H1 (cell line): ENCODE measurements at regions of chr11 and their contacts with region 1.

Region 1: GRCh38 chr11:119101759-119102423 is at the start of gene DPAGT1:
- DNase-seq: peak; percentile 79 to 92
- H3K4me3 ChIP-seq: peak within 1 kb of the TSS; percentile 66 to 97 (median 90)
- H3K27ac ChIP-seq: peak within 1 kb of the TSS; percentile 99
- H3K4me1 ChIP-seq: peaks cover 3 to 20% (median 5%) of the 10 kb centered on the region in 4 experiments
- H3K27me3 ChIP-seq: no peaks in the 10 kb centered on the region
- CTCF ChIP-seq: no peak
- EP300 ChIP-seq: peak in 1 of 2 experiments; percentile 50; a peak in 1 of 3 replicates
- POLR2A ChIP-seq: peak; percentile 8 to 76; a peak in 1 of 3 replicates
- RAD21 ChIP-seq: no peak
- total RNA-seq, gene DPAGT1: 59.8 and 62.9 TPM in 2 replicates

Region 2: GRCh38 chr11:118672846-118673245 is 429.0 kb before region 1 on chr11:
- CTCF ChIA-PET with region 1: no interaction called
- POLR2A ChIA-PET with region 1: no interaction called
- DNase-seq: no peak
- H3K4me3 ChIP-seq: no peak overlapping the region
- H3K27ac ChIP-seq: no peak overlapping the region
- H3K4me1 ChIP-seq: no peaks in the 10 kb centered on the region
- H3K27me3 ChIP-seq: no peaks in the 10 kb centered on the region; a peak in 1 of 7 replicates
- CTCF ChIP-seq: peak in 2 of 3 experiments; percentile 26 to 52; a peak in 2 of 4 replicates
- EP300 ChIP-seq: no peak
- POLR2A ChIP-seq: no peak
- RAD21 ChIP-seq: peak; percentile 24 to 28; a peak in 3 of 4 replicates

Region 3: DNA sequence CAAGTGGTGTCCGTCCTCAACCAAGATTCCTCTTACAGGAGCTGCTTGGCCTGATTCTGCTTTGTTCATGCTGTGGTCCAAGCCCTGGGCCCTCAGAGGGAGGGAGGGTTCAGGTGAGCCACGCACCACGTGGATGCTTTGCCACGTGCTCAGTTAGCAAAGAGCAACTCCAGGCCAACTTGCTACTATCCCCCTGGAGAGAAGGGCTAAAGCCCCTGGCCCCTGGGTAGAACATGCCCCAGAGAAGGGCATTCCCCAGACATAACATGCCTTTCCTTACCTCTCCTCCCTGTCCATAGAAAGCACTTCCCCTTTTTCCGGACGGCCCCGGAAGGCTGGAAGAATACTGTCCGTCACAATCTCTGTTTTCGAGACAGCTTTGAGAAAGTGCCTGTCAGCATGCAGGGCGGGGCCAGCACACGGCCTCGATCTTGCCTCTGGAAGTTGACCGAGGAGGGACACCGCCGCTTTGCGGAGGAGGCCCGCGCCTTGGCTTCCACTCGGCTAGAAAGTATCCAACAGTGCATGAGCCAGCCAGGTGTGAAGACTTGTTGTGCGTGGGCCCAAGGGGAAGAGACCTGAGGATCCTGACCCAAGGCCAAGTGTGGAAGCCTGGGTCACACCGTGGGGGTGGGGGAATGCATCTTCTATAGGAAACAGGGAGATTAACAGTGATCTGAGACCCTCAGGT is 121.6 kb before region 1 on chr11:
- CTCF ChIA-PET with region 1: no interaction called
- POLR2A ChIA-PET with region 1: no interaction called
- DNase-seq: peak in 1 of 2 experiments; percentile 59
- H3K4me3 ChIP-seq: peak overlapping the region in 1 of 4 experiments; percentile 1; a peak in 1 of 8 replicates
- H3K27ac ChIP-seq: no peak overlapping the region
- H3K4me1 ChIP-seq: peaks cover 0 to 18% (median 10%) of the 10 kb centered on the region in 4 experiments; a peak in 5 of 7 replicates
- H3K27me3 ChIP-seq: peaks cover 0 to 5% (median 0%) of the 10 kb centered on the region in 4 experiments; a peak in 1 of 7 replicates
- CTCF ChIP-seq: no peak
- EP300 ChIP-seq: no peak
- POLR2A ChIP-seq: no peak
- RAD21 ChIP-seq: no peak

Region 4: DNA sequence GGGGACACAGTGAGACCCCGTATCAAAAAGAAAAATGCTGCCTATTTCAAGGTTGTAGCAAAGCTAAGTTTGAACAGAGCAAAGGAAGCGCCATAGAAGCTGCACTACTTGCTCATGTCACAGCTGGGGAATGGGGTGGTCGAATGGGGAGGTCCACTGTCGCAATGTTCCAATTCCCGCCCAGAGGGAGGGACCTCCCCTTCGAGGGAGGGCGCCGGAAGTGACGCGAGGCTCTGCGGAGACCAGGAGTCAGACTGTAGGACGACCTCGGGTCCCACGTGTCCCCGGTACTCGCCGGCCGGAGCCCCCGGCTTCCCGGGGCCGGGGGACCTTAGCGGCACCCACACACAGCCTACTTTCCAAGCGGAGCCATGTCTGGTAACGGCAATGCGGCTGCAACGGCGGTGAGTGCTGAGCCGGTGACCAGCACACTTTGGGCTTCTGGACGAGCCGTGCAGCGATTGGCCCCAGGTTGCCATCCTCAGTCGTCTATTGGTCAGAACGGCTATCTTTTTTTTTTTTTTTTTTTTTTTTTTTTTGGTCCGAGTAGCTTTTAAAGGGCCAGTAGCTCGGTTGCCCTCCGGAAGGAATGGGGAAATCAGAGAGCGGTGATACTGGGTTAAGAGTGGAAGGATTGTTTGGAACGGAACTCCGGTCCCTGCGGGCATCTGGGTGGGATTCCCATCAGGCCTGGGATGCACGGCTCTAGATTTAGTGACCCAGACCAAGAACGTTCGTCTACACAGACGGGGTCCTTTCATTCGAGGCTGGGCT is 17.0 kb before region 1 on chr11 and contains the start of gene HMBS:
- CTCF ChIA-PET with region 1: interaction called, 5 read pairs
- POLR2A ChIA-PET with region 1: interaction called, 141 read pairs
- DNase-seq: peak; percentile 75 to 97
- H3K4me3 ChIP-seq: peak within 1 kb of the TSS; percentile 78 to 97 (median 86)
- H3K27ac ChIP-seq: peak within 1 kb of the TSS; percentile 98
- H3K4me1 ChIP-seq: peaks cover 0 to 5% (median 2%) of the 10 kb centered on the region in 4 experiments; a peak in 2 of 7 replicates
- H3K27me3 ChIP-seq: no peaks in the 10 kb centered on the region
- CTCF ChIP-seq: no peak
- EP300 ChIP-seq: no peak
- POLR2A ChIP-seq: peak; percentile 68 to 95
- RAD21 ChIP-seq: no peak; a peak in 1 of 4 replicates
- total RNA-seq, gene HMBS: 65.5 and 69.3 TPM in 2 replicates

Region 5: DNA sequence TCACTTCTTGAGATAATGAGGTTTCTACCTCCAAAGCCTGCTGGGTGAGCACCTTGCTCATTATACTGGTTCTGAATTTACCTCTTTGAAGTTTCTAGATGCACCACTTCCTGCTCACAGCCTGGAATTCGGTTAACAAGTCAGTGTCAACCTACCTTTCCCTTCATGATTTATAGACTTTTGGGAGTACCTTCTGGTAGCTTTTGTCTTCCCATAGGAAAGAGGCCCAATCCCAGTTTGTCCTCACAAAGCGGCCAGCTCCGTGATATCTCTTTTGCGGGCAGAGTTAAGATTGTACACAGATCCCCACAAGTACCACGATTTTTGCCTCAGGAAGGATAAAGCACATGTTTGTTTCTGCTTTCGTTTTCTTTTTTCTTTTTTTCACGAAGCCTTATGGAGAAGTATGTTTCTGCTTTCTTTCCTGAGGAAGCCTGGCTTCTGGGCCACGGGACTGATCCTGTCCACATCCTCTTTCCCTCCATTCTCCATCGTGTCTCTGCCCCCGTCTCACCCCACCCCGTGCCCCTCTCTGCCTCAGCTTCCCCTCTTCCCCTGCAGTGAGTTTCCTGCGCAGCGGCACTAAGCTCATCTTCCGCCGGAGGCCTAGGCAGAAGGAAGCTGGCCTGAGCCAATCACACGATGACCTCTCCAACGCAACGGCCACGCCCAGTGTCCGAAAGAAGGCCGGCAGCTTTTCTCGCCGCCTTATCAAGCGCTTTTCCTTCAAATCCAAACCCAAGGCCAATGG is 13.8 kb after region 1 on chr11:
- CTCF ChIA-PET with region 1: interaction called, 26 read pairs
- POLR2A ChIA-PET with region 1: interaction called, 139 read pairs
- DNase-seq: no peak
- H3K4me3 ChIP-seq: no peak overlapping the region
- H3K27ac ChIP-seq: no peak overlapping the region
- H3K4me1 ChIP-seq: peaks cover 0 to 4% (median 1%) of the 10 kb centered on the region in 4 experiments; a peak in 2 of 7 replicates
- H3K27me3 ChIP-seq: no peaks in the 10 kb centered on the region
- CTCF ChIP-seq: no peak
- EP300 ChIP-seq: no peak
- POLR2A ChIP-seq: no peak
- RAD21 ChIP-seq: no peak

Region 6: GRCh38 chr11:119121008-119121810 is 19.3 kb after region 1 on chr11 and contains the start of gene HINFP:
- CTCF ChIA-PET with region 1: interaction called, 26 read pairs
- POLR2A ChIA-PET with region 1: interaction called, 42 read pairs
- DNase-seq: peak; percentile 98
- H3K4me3 ChIP-seq: peak within 1 kb of the TSS; percentile 63 to 97 (median 93)
- H3K27ac ChIP-seq: peak within 1 kb of the TSS; percentile 68
- H3K4me1 ChIP-seq: peaks cover 2 to 10% (median 6%) of the 10 kb centered on the region in 4 experiments; a peak in 6 of 7 replicates
- H3K27me3 ChIP-seq: no peaks in the 10 kb centered on the region
- CTCF ChIP-seq: no peak
- EP300 ChIP-seq: no peak
- POLR2A ChIP-seq: peak; percentile 33 to 87
- RAD21 ChIP-seq: no peak
- total RNA-seq, gene HINFP: 35.0 and 36.6 TPM in 2 replicates